ENCODE measurements at regions of chr1 and their contacts with region 1.

Region 1: GRCh38 chr1:153617675-153618074 is 1.6 kb upstream of the S100A14 start:
- DNase-seq: peak; percentile 70
- H3K4me3 Mint-ChIP-seq: no peak overlapping the region
- H3K27ac Mint-ChIP-seq: no peak overlapping the region
- H3K4me1 Mint-ChIP-seq: peaks cover 4% of the 10 kb centered on the region
- H3K27me3 Mint-ChIP-seq: no peaks in the 10 kb centered on the region

Region 2: DNA sequence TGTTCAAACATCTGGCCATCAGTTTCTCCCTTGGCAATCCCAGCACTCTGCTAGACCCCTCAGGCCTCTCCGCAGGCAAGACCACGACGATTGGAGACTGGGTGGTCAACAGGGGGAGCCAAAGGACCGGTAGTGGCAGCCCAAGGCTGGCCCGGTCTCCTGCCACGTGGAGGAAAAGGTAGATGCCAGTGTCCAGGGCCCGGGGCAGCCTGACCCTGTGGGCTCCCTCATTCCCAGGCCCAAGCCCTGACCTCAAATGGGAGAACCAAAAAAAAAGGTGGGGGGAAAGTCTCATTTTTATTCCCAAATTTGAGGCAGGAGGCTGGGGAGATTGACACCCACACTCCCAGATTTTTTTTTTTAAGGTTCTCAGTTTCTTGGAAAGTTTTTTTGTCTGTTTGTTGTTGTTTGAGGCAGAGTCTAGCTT is 106.7 kb before region 1 on chr1:
- intact Hi-C with region 1: loop called (anchors 1 kb)
- DNase-seq: peak; percentile 64
- H3K4me3 Mint-ChIP-seq: no peak overlapping the region
- H3K27ac Mint-ChIP-seq: peak overlapping the region; percentile 56
- H3K4me1 Mint-ChIP-seq: peaks cover 11% of the 10 kb centered on the region
- H3K27me3 Mint-ChIP-seq: no peaks in the 10 kb centered on the region

Region 3: DNA sequence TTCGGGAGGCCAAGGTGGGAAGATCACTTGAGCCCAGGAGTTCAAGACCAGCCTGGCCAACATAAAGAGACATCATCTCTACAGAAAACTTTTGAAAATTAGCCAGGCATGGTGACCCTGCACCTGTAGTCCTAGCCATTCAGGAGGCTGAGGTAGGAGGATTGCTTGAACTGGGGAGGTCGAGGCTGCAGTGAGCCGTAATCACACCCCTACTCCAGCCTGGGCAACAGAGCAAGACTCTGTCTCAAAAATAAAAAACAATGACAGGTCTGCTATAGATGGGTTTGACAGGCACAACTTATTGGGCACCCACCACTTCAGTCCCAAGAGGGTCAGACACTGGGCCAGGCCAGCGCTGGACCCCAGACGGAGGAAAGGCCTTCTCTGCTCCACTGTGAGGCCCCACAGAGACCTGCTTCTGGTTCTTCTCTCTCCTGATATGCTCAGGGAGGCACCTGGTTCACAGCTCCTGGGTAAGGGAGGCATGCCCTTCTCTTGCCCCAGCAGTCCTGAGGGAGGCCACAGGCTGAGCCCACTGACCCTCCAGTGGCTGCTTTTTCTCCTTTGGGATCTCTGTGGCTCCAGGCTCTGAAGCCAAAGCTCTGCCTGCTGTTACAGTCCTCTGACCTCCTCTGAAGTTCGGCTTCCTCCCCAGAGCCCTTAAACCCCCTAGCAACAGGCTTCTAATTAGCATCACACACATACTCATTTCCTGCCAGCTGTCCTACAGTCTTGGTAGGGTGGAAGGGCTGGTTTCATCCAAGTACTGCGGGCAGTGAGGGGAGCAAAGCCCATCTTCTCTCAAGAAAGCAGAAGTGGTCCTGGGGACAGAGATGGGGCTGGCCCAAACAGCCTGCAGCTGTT is 19.1 kb before region 1 on chr1:
- intact Hi-C with region 1: no loop called
- DNase-seq: no peak
- H3K4me3 Mint-ChIP-seq: no peak overlapping the region
- H3K27ac Mint-ChIP-seq: peak overlapping the region; percentile 23
- H3K4me1 Mint-ChIP-seq: peaks cover 21% of the 10 kb centered on the region
- H3K27me3 Mint-ChIP-seq: no peaks in the 10 kb centered on the region

Measured in activated T-helper 2 cell treated with anti-CD3 and anti-CD28 coated beads, Interferon-gamma antibody, Interleukin-2, Interleukin-4, amounts not matched to agents 10 μg/mL and 5 μg/mL and 100 μg/mL, durations not matched to agents 14 hours and 24 hours and 36 hours (primary cell).